Activated B cell treated with CpG ODN at 0.5 μM for 24 hours (primary cell): ENCODE measurements at regions of chrX and their contacts with region 1.

Region 1: DNA sequence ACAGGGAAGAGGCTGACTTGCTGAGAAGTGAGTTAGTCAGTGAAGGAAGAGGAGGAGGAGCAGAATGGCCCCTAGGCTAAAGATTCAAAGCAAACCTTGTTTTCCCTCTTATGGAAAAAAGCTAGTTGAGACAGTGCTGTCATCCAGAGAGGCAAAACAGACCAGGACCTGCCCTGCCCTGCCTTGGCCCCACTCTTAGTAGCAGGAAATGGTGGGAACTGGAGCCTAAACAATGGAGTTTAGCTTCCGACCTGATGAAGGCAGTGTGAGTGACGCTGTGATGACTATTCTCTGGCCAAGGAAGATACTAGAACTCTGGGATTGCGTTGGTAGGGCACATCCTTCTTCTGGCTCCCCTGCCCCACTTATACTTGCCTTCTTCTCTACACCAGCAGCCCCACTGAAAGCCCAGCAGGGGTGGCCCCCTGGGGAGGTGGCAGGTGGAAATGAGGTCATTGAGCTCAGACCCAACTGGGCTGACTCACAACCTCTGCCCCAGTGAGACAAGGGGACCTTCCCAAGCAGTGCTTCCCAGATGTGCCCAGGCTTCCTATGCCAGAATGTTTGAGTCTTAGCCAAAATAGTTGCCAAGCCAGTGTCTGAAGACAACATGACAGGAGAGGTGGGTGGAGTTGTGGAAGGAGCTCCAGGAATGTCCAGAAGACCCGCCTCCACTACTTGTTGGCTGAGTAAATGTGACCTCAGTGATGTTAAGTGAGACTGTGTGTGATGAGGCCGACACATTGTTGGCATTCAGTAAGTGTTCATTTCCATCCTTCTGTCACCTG is 38.8 kb downstream of the MSN start:
- DNase-seq: peak; percentile 34
- ATAC-seq: peak; percentile 92
- H3K4me3 Mint-ChIP-seq: peak overlapping the region; percentile 50
- H3K27ac Mint-ChIP-seq: peak overlapping the region; percentile 89
- H3K4me1 Mint-ChIP-seq: peaks cover 69% of the 10 kb centered on the region
- H3K27me3 Mint-ChIP-seq: no peaks in the 10 kb centered on the region
- CTCF ChIP-seq: no peak

Region 2: GRCh38 chrX:65723706-65724105 is 17.5 kb after region 1 on chrX:
- CTCF ChIA-PET with region 1: no interaction called
- POLR2A ChIA-PET with region 1: interaction called, 8 read pairs
- intact Hi-C with region 1: loop called (anchors 2 kb)
- DNase-seq: no peak
- ATAC-seq: peak; percentile 88
- H3K4me3 Mint-ChIP-seq: peak overlapping the region; percentile 32
- H3K27ac Mint-ChIP-seq: peak overlapping the region; percentile 76
- H3K4me1 Mint-ChIP-seq: peaks cover 87% of the 10 kb centered on the region
- H3K27me3 Mint-ChIP-seq: no peaks in the 10 kb centered on the region
- CTCF ChIP-seq: no peak

Region 3: GRCh38 chrX:65941775-65942174 is 235.5 kb after region 1 on chrX:
- CTCF ChIA-PET with region 1: no interaction called
- POLR2A ChIA-PET with region 1: no interaction called
- intact Hi-C with region 1: no loop called
- DNase-seq: no peak
- ATAC-seq: no peak
- H3K4me3 Mint-ChIP-seq: no peak overlapping the region
- H3K27ac Mint-ChIP-seq: no peak overlapping the region
- H3K4me1 Mint-ChIP-seq: no peaks in the 10 kb centered on the region
- H3K27me3 Mint-ChIP-seq: no peaks in the 10 kb centered on the region
- CTCF ChIP-seq: no peak